Activated CD4-positive, alpha-beta T cell treated with anti-CD3 and anti-CD28 coated beads, Interleukin-2, amount 10 ng/mL, durations not matched to agents 7 days and 5 days (primary cell): ENCODE measurements at regions of chr21 and their contacts with region 1.

Region 1: GRCh38 chr21:42424914-42425541 is 21.3 kb downstream of the UBASH3A start:
- DNase-seq: peak; percentile 85
- H3K4me3 Mint-ChIP-seq: peak overlapping the region; percentile 54
- H3K27ac Mint-ChIP-seq: peak overlapping the region; percentile 90
- H3K4me1 Mint-ChIP-seq: peaks cover 74% of the 10 kb centered on the region
- H3K27me3 Mint-ChIP-seq: no peaks in the 10 kb centered on the region

Region 2: GRCh38 chr21:42374864-42375492 is 50.0 kb before region 1 on chr21:
- CTCF ChIA-PET with region 1: no interaction called
- POLR2A ChIA-PET with region 1: no interaction called
- DNase-seq: no peak
- H3K4me3 Mint-ChIP-seq: no peak overlapping the region
- H3K27ac Mint-ChIP-seq: peak overlapping the region; percentile 66
- H3K4me1 Mint-ChIP-seq: peaks cover 18% of the 10 kb centered on the region
- H3K27me3 Mint-ChIP-seq: no peaks in the 10 kb centered on the region

Region 3: GRCh38 chr21:42400525-42400924 is 24.5 kb before region 1 on chr21:
- CTCF ChIA-PET with region 1: interaction called, 22 read pairs
- POLR2A ChIA-PET with region 1: interaction called, 14 read pairs
- DNase-seq: no peak
- H3K4me3 Mint-ChIP-seq: no peak overlapping the region
- H3K27ac Mint-ChIP-seq: no peak overlapping the region
- H3K4me1 Mint-ChIP-seq: peaks cover 57% of the 10 kb centered on the region
- H3K27me3 Mint-ChIP-seq: no peaks in the 10 kb centered on the region